ENCODE measurements at regions of chr2 and their contacts with region 1.

Region 1: GRCh38 chr2:39513641-39514094 is 76.6 kb upstream of the MAP4K3 start:
- DNase-seq: no peak

Region 2: DNA sequence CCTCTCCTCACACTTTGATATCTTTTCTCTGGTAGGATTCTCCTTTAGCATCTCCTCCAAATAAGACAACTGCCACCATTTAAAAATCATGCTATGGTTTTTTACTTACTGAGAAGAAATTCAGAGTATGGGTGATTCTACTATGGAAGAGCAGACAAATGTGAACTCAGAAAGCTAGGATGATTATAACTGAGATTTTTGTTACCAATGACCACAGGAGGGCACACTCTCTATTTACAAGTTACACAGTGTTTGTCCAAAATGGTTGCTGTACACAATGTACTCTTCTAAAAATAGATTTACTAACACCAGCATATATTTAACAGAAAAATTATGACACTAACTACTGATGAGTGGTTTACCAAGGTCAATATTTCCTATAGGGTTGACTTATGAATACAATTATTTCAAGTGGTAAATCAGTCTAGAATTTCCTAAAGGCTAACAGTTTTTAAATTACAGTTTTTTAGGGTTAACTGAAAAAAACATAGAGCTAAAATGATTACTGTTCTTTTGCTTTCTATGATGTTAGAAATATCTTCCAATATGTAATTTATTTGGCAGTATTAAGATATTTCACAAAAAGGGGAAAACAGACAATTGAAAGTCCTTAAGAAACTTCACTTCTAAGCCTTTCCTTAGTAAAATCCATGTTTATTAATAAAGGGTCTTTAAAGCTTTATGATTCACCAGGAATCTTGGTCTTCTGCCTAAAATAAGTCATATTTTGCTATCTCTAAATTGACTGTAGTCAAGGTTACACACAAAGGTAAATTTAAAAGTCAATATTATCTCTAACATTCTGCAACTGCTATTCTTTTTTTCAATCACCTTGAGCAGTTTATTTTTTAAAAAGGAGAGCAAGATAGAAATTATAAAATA is 133.8 kb before region 1 on chr2:
- intact Hi-C with region 1: loop called (anchors 5 kb)
- DNase-seq: no peak

Region 3: GRCh38 chr2:39593439-39594393 is 80.0 kb after region 1 on chr2:
- intact Hi-C with region 1: loop called (anchors 5 kb)
- DNase-seq: no peak

Region 4: DNA sequence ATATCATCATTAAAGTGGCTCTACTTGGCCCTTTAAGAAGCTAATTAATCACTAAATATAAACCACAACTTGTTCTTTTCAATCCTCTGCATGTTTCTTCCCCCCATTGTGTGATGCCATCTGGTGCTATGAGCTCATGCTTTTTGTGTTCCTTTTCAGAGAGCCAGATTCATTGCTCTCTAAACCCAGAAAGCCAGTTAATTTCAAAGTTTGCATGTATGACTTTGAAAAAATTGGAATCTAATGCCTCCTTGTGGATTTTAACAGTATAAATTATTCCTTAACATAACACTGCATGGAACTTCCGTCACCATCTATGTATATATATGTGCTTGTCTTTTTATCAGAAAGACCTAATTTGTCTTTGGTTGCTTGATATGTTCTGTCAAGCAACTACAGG is 183.2 kb after region 1 on chr2:
- intact Hi-C with region 1: loop called (anchors 2 kb)
- DNase-seq: no peak

Region 5: GRCh38 chr2:39728941-39729351 is 215.3 kb after region 1 on chr2:
- intact Hi-C with region 1: loop called (anchors 5 kb)
- DNase-seq: no peak

Measured in cardiac septum (tissue), 1 donor.